ENCODE measurements at regions of chr14 and their contacts with region 1.

Region 1: GRCh38 chr14:75340921-75341320 is 62.3 kb downstream of the FOS start:
- DNase-seq: peak; percentile 82 to 95
- ATAC-seq: peak; percentile 81 to 98 (median 96)
- H3K4me3 ChIP-seq: no peak overlapping the region
- H3K27ac ChIP-seq: peak overlapping the region; percentile 72 to 91 (median 84)
- H3K4me1 ChIP-seq: peaks cover 11 to 76% (median 38%) of the 10 kb centered on the region in 9 donors
- H3K27me3 ChIP-seq: no peaks in the 10 kb centered on the region
- CTCF ChIP-seq: no peak

Region 2: GRCh38 chr14:75399821-75400678 is 59.1 kb after region 1 on chr14:
- intact Hi-C with region 1: loop called in 1 of 10 experiments (anchors 1 kb)
- DNase-seq: peak; percentile 86 to 89
- ATAC-seq: peak; percentile 86 to 97 (median 92)
- H3K4me3 ChIP-seq: no peak overlapping the region
- H3K27ac ChIP-seq: peak overlapping the region in 9 of 10 donors; percentile 55 to 80 (median 76)
- H3K4me1 ChIP-seq: peaks cover 14 to 30% (median 28%) of the 10 kb centered on the region in 9 donors
- H3K27me3 ChIP-seq: no peaks in the 10 kb centered on the region
- CTCF ChIP-seq: no peak

Measured in heart right ventricle (tissue), 16 donors.